Psoas muscle (tissue), 8 donors: ENCODE measurements at regions of chr19 and their contacts with region 1.

Region 1: GRCh38 chr19:5057861-5058260 is 88.9 kb downstream of the KDM4B start:
- DNase-seq: peak in 1 of 2 donors; percentile 60
- ATAC-seq: peak in 2 of 4 donors; percentile 19 to 28
- H3K4me3 ChIP-seq: no peak overlapping the region
- H3K27ac ChIP-seq: no peak overlapping the region
- H3K4me1 ChIP-seq: peaks cover 2% of the 10 kb centered on the region
- H3K27me3 ChIP-seq: no peaks in the 10 kb centered on the region
- CTCF ChIP-seq: no peak

Region 2: DNA sequence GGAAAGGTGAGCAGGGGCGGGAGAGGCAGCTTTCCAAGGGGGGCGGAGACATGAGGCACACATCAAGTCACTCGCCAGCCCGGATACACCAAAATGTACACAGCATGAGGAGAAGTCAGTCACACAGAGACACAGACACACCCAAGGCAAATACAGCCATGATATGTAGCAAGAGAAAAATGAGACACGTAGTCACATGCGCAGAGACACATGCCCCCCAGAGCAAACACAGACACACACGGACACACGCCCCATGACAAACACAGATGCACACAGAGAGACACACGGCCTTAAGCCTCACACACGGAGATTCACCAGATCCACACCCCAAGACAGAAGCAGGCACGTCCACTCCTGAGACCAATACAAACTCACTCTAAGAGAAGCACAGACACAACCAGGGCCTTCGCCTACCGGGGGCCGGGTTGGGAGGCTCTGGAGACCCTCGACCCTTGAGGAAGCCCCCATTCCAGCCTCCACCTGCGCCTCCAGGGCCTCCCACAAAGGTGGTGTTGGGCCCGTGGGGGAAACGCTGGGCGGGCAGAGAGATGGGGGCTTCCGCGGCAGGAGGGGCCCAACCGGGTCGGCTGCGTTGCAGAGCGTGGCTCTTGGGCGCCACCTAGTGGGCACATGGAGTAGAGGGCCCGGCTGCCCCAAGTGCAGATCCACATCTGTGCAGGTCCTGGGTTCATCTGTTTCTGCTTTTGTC is 520.1 kb after region 1 on chr19:
- intact Hi-C with region 1: loop called in 1 of 2 experiments (anchors 10 kb)
- DNase-seq: peak; percentile 62 to 81
- ATAC-seq: peak; percentile 77 to 86 (median 84)
- H3K4me3 ChIP-seq: no peak overlapping the region
- H3K27ac ChIP-seq: no peak overlapping the region
- H3K4me1 ChIP-seq: no peaks in the 10 kb centered on the region
- H3K27me3 ChIP-seq: no peaks in the 10 kb centered on the region
- CTCF ChIP-seq: peak; percentile 99